ENCODE measurements at regions of chr2 and their contacts with region 1.

Region 1: DNA sequence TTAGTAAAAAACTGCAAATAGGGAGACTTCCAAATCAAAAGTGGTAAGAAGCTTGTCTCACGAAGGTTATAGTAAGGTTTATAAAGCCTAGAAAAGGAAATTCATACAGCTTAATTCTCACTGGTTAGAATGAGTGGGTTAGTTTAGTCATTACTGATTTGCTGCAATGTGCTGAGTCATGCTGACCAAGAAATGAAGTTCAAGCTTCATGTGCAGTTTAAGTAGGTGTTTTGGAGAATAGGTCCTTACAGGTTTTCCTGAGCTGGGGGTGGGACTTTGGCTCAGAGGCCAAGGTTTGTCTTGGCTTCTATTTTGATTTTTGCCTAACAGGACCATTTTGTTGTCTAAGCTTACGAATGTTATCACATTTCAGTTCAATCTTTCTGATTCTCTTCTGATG is 15.1 kb downstream of the CLIP4 start:
- DNase-seq: peak; percentile 74
- H3K4me3 ChIP-seq: peak overlapping the region in 1 of 3 experiments; percentile 29
- H3K27ac ChIP-seq: peak overlapping the region; percentile 90
- H3K4me1 ChIP-seq: peaks cover 24% of the 10 kb centered on the region
- H3K27me3 ChIP-seq: no peaks in the 10 kb centered on the region
- CTCF ChIP-seq: no peak
- POLR2A ChIP-seq: no peak

Region 2: GRCh38 chr2:29115797-29116781 is 14.2 kb before region 1 on chr2:
- CTCF ChIA-PET with region 1: interaction called, 41 read pairs
- POLR2A ChIA-PET with region 1: interaction called, 30 read pairs
- dilution Hi-C with region 1: no loop called
- intact Hi-C with region 1: no loop called
- DNase-seq: peak; percentile 68
- H3K4me3 ChIP-seq: peak overlapping the region; percentile 63 to 91 (median 91)
- H3K27ac ChIP-seq: peak overlapping the region; percentile 80
- H3K4me1 ChIP-seq: peaks cover 31% of the 10 kb centered on the region
- H3K27me3 ChIP-seq: no peaks in the 10 kb centered on the region
- CTCF ChIP-seq: no peak
- POLR2A ChIP-seq: no peak

Region 3: DNA sequence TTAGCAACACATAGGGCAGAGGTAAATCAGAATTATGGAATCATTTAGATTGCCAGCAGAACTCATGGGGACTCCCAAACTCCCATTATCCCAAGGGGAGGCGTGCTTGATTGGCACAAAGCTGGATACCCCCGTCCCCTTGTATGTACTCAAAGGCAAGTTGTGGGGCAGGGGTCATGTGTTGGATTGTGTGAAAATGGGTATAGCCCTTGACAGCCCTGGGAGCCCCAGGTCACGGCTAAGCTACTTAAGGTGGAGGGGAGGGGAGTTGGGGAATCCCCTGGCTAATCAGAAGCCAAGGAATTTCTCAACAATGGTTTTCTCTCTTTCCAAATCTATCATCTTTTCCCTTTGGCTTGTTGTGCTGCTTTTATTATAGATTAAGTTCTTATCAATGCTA is 17.7 kb after region 1 on chr2:
- CTCF ChIA-PET with region 1: interaction called, 12 read pairs
- POLR2A ChIA-PET with region 1: interaction called, 5 read pairs
- dilution Hi-C with region 1: no loop called
- intact Hi-C with region 1: no loop called
- DNase-seq: no peak
- H3K4me3 ChIP-seq: no peak overlapping the region
- H3K27ac ChIP-seq: no peak overlapping the region
- H3K4me1 ChIP-seq: no peaks in the 10 kb centered on the region
- H3K27me3 ChIP-seq: no peaks in the 10 kb centered on the region
- CTCF ChIP-seq: no peak
- POLR2A ChIP-seq: no peak

Measured in endothelial cell of umbilical vein (primary cell).